ENCODE measurements at regions of chr5 and their contacts with region 1.

Region 1: DNA sequence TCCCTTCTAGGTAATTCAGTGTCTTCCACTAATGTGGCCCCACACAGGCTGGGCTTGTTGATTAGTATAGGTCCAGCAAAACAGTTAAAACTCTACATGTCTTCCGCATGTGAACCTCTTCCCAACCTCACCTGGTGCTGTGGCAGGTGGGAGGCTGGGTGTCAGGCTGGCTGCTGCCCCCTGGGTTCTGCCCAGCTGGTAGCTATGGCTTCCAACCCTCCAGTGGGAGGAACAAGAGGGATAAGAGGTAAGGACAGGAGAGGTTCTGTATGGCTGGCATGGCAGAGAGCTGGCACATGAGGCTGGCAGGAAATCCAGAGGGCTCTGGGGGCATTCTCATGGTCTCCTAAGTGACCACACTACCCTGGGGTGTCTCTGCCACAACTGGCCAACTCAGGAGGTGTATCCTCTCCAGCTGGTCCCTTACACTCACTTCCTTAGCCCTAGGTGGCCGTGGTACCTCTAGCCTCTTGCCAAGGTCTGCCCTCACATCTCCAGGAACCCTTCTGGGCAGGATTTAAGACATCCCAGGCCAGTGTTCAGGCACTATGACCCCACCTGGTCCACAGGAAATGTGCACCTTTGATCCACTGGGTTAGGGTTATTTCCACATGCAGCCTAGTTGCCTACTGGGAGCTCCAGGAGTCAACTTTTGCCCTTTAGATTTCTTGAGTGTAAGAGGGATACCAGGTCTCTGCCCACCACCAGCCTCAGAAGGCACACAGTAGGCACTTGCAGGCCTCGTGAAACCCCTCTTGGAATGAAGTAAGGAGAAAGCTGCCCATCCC is 41.7 kb downstream of the AHRR start:
- DNase-seq: no peak
- ATAC-seq: no peak
- H3K4me3 ChIP-seq: no peak overlapping the region
- H3K27ac ChIP-seq: no peak overlapping the region
- H3K4me1 ChIP-seq: no peaks in the 10 kb centered on the region; a peak in 1 of 5 replicates
- H3K27me3 ChIP-seq: peaks cover 20 to 26% of the 10 kb centered on the region in 2 experiments; a peak in 4 of 5 replicates
- CTCF ChIP-seq: no peak
- EP300 ChIP-seq: no peak
- POLR2A ChIP-seq: no peak
- RAD21 ChIP-seq: no peak

Region 2: GRCh38 chr5:352639-353611 is 10.2 kb before region 1 on chr5:
- CTCF ChIA-PET with region 1: no interaction called
- POLR2A ChIA-PET with region 1: interaction called, 14 read pairs
- in situ Hi-C with region 1: no loop called
- intact Hi-C with region 1: no loop called
- DNase-seq: no peak
- ATAC-seq: peak; percentile 41
- H3K4me3 ChIP-seq: no peak overlapping the region
- H3K27ac ChIP-seq: no peak overlapping the region
- H3K4me1 ChIP-seq: peaks cover 0 to 6% of the 10 kb centered on the region in 2 experiments; a peak in 1 of 5 replicates
- H3K27me3 ChIP-seq: peaks cover 28 to 59% of the 10 kb centered on the region in 2 experiments
- CTCF ChIP-seq: no peak
- EP300 ChIP-seq: no peak
- POLR2A ChIP-seq: no peak
- RAD21 ChIP-seq: no peak

Measured in K562 (cell line).